Cardiac septum (tissue), 1 donor: ENCODE measurements at regions of chr1 and their contacts with region 1.

Region 1: DNA sequence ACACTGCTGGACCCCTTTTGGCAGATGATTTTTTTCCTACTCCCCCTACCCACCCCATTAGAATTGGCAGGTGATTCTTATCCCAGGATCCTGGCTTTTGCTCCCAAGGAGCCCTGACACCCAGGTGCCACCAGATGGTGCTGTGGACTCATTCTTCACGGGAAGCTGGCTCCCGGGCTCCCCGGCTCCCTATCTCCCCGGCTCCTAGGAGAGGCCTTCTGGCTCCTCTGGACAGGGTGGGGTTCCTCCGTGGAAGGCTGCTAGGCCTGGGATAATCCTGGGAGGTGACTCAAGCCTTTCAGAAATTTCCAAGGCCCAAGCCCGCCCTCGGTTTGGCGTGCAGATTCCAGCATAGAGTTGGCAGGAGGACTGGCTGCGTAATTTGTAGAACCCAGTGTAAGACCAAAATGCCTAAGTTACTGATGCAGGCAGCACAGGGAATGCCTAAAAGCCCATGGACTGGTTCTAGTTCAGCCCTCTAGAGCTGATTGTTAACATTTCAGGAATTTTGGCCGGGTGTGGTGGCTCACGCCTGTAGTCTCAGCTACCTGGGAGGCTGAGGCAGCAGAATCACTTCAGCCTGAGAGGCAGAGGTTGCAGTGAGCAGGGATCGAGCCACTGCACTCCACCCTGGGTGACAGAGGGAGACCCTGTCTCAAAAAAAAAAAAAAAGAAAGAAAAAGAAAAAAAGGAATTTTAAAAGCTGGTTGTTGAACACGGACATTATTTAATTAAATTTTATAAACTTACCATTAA is 6.8 kb upstream of the BSDC1 start:
- DNase-seq: peak; percentile 88

Region 2: DNA sequence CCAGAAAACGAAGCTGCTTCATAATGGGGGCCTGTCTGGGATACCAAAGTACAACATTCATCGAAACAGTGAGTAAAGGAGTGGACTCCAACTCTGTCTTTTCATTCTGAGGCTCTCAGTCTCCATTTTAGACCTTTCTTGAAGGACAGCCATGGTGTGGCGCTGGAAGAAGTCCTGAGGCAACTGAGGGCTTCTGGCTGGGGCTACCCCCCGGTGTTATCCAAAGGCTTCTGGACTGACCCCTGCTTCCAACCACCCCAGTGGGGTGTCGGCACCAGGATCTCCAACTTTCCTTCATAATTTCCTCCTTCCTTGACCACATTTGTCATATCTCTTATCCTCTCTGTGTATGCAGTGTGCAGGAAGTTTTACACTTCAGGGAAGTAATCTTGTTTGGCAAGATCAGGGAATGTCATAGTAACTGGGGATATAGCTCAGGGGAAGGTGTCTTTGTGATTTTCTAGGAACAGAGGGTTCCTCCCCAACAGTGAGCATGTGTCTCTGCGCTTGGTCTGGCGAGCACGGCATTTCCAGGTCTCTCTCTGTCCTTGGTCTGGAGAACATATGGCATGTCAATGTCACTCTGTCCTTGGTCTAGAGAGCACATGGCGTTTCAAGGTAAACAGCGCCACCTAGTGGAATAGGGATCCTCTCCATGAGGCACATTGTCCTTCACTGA is 12.6 kb after region 1 on chr1:
- intact Hi-C with region 1: loop called (anchors 2 kb)
- DNase-seq: no peak

Region 3: DNA sequence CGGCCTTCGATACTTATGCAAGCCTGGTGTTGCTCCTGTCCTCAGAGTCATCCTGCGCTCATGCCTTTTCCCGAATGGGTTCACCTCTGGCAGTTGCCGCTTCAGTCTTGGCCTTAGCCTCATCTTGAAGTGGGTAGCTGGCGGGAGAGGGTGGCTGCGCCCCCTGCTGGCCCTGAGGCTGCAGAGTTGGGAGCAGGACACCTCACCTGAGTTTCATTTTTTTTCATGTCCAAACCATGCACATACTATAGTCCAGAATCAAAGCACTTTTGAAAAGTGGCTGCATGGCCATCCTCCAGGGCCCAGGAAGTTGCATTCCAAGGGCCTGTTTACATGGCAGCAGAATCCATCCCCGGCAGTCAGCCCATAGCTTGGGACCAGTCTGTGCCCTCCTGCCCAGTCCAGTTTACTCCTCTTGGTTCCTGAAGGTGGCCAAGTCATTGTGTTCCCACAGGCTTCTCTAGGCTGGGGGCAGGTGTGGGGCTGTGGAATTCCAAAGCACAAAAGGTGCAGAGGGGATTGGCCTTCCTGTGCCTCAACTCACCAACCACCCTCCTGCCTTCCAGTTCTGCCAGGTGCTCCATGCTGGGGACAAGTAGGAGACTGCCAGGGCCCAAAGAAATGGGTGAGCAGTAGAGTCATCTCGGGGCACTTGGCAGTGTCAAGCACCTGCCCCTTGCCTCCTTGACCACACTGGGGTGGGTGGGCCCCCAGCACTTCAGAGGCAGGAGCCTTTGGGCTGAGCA is 372.1 kb after region 1 on chr1:
- intact Hi-C with region 1: loop called (anchors 5 kb)
- DNase-seq: peak; percentile 86